ENCODE measurements at regions of chr13 and their contacts with region 1.

Region 1: DNA sequence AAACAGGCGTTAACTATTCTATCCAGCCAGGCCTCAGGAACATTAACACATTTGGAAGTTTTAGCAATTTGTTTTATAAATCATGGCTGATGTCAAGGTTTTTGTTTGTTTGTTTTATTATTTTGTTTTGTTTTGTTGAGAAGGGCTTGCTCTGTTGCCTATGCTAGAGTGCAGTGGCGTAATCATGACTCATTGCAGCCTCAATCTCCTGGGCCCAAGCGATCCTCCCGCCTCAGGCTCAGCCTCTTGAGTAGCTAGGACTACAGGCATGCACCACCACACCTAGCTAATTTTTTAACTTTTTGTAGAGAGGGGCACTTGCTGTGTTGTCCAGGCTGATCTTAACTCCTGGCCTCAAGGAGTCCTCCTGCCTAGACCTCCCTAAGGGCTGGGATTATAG is 28.3 kb downstream of the NUP58 start:
- H3K4me3 Mint-ChIP-seq: no peak overlapping the region
- H3K27ac Mint-ChIP-seq: no peak overlapping the region
- H3K4me1 Mint-ChIP-seq: no peaks in the 10 kb centered on the region
- H3K27me3 Mint-ChIP-seq: no peaks in the 10 kb centered on the region

Region 2: DNA sequence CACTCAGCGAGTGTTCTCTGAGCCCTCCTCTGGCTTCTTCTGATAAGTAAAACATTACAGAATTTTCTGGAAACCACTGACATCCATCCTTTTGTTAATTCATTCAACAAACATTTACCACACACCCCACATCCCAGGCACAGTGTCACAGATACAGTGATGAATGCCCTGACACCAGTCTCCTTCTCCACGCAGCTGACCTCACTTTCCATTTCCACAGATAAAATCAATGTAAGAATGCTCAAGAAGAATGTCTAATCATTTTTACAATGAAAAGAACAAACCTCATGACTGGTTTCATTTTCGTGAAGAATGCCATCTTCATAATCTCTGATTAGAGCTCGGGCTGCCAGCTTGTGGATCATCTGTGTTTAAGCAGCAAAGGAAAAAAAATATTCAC is 886.3 kb before region 1 on chr13:
- intact Hi-C with region 1: loop called (anchors 10 kb)
- H3K4me3 Mint-ChIP-seq: no peak overlapping the region
- H3K27ac Mint-ChIP-seq: no peak overlapping the region
- H3K4me1 Mint-ChIP-seq: no peaks in the 10 kb centered on the region
- H3K27me3 Mint-ChIP-seq: no peaks in the 10 kb centered on the region

Region 3: GRCh38 chr13:24491845-24492244 is 837.9 kb before region 1 on chr13:
- intact Hi-C with region 1: no loop called
- H3K4me3 Mint-ChIP-seq: no peak overlapping the region
- H3K27ac Mint-ChIP-seq: no peak overlapping the region
- H3K4me1 Mint-ChIP-seq: no peaks in the 10 kb centered on the region
- H3K27me3 Mint-ChIP-seq: no peaks in the 10 kb centered on the region

Region 4: DNA sequence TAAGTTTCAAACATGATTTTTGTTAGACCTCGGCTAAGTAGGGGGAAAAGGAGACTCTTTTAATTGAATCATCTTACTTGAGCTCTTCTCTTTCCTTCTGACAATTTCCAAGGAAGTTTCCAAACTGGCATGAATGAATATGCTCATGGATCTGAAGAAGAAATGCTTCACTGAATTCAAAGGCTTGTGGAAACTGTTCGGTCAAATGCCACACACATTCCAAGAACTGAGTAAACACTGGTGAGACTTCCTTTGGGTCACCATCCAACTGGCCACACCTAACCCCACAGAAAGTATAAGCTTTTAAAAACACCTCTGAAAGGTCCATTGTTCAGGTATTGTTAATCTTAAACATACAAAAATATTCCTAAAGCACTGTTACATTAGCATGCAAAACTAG is 76.0 kb before region 1 on chr13:
- intact Hi-C with region 1: loop called (anchors 5 kb)
- H3K4me3 Mint-ChIP-seq: no peak overlapping the region
- H3K27ac Mint-ChIP-seq: no peak overlapping the region
- H3K4me1 Mint-ChIP-seq: peaks cover 20% of the 10 kb centered on the region
- H3K27me3 Mint-ChIP-seq: no peaks in the 10 kb centered on the region

Region 5: DNA sequence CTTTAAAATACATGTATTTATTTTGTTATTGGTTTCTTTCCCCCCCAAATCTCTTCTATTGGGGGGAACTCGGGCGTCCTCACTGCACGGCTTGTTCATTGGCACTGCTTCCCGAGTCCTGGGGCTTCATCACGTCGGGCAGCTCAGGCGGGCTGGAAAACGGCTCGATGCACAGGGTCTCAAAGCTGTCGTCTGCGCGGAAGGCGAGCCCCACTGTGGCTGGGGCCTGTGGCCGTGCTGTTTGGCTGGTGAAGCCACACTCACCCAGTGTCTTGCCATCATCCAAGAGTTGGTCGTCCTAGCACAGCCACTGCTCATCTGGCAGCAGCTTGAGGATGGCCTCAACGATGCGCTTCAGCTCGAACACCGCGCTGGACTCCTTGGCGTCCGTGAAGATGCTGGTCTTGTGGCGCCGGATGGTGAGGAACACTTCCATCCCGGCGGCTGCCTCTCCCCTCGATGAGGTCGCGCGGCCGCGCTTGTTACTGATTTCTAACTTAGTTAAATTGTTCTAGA is 36.1 kb after region 1 on chr13:
- intact Hi-C with region 1: no loop called
- H3K4me3 Mint-ChIP-seq: no peak overlapping the region
- H3K27ac Mint-ChIP-seq: no peak overlapping the region
- H3K4me1 Mint-ChIP-seq: no peaks in the 10 kb centered on the region
- H3K27me3 Mint-ChIP-seq: peaks cover 34% of the 10 kb centered on the region

Region 6: GRCh38 chr13:26221721-26222519 is 892.2 kb after region 1 on chr13 and contains the start of gene RNF6:
- intact Hi-C with region 1: loop called (anchors 10 kb)
- H3K4me3 Mint-ChIP-seq: peak within 1 kb of the TSS; percentile 99
- H3K27ac Mint-ChIP-seq: peak within 1 kb of the TSS; percentile 99
- H3K4me1 Mint-ChIP-seq: peaks cover 25% of the 10 kb centered on the region
- H3K27me3 Mint-ChIP-seq: no peaks in the 10 kb centered on the region